ENCODE measurements at regions of chr6 and their contacts with region 1.

Region 1: GRCh38 chr6:28355743-28356665 is 6.3 kb downstream of the ZKSCAN3 start:
- DNase-seq: peak; percentile 74
- H3K4me3 ChIP-seq: peak overlapping the region; percentile 75 to 84
- H3K27ac ChIP-seq: peak overlapping the region; percentile 59 to 71; a peak in 3 of 4 replicates
- H3K4me1 ChIP-seq: peaks cover 10 to 20% of the 10 kb centered on the region in 2 experiments; a peak in 3 of 4 replicates
- H3K27me3 ChIP-seq: no peaks in the 10 kb centered on the region
- CTCF ChIP-seq: peak; percentile 68
- EP300 ChIP-seq: no peak
- RAD21 ChIP-seq: peak; percentile 85

Region 2: GRCh38 chr6:28218271-28219248 is 137.4 kb before region 1 on chr6:
- CTCF ChIA-PET with region 1: interaction called, 11 read pairs
- POLR2A ChIA-PET with region 1: no interaction called
- DNase-seq: peak; percentile 93
- H3K4me3 ChIP-seq: peak overlapping the region; percentile 55 to 67
- H3K27ac ChIP-seq: peak overlapping the region in 1 of 2 experiments; percentile 81; a peak in 2 of 4 replicates
- H3K4me1 ChIP-seq: peaks cover 0 to 11% of the 10 kb centered on the region in 2 experiments; a peak in 2 of 4 replicates
- H3K27me3 ChIP-seq: no peaks in the 10 kb centered on the region; the same call in 1 of the 2 replicates
- CTCF ChIP-seq: no peak
- EP300 ChIP-seq: no peak
- RAD21 ChIP-seq: no peak

Region 3: DNA sequence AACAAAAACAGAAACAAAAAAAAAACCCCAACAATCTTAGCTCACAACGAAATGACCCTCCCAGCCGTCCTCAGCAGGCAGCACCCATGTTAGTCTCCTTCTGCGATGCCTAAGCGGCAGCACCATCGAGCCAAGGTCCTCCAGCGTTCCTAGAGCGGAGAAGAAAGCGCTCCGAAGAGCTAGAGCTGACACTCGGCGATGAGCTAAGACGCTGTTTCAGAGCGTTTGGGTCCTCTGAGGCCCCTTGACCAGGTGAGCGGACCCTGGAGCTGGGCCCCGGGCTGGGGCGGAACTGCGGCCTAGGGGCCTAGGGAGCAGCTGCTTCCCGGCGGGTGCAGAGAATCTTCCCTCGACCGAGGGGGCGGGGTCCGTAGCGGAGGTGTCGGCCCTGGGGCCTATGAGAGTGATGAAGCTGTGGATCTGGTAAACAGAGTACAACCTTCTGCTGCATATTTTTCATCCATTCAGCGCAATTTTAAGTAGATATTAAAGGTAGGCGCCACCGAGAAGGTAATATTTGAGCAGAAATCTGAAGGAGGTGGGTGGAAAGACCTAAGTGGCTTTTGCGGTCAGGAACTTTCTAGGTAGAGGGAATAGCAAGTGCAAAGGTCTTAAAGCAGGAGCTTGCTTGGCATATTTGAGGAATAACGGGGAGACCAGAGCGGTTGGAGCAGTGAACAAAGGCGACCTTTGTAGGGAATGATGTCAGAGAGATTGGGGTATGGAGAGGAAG is 88.9 kb before region 1 on chr6 and contains the start of gene ZSCAN26:
- CTCF ChIA-PET with region 1: interaction called, 29 read pairs
- POLR2A ChIA-PET with region 1: interaction called, 8 read pairs
- DNase-seq: peak; percentile 85
- H3K4me3 ChIP-seq: peak within 1 kb of the TSS; percentile 76 to 85
- H3K27ac ChIP-seq: peak within 1 kb of the TSS; percentile 71 to 96
- H3K4me1 ChIP-seq: peaks cover 0 to 10% of the 10 kb centered on the region in 2 experiments; a peak in 3 of 4 replicates
- H3K27me3 ChIP-seq: no peaks in the 10 kb centered on the region
- CTCF ChIP-seq: no peak
- EP300 ChIP-seq: no peak
- RAD21 ChIP-seq: no peak
- polyA plus RNA-seq, gene ZSCAN26: 11.0 and 14.0 TPM in 2 replicates

Region 4: DNA sequence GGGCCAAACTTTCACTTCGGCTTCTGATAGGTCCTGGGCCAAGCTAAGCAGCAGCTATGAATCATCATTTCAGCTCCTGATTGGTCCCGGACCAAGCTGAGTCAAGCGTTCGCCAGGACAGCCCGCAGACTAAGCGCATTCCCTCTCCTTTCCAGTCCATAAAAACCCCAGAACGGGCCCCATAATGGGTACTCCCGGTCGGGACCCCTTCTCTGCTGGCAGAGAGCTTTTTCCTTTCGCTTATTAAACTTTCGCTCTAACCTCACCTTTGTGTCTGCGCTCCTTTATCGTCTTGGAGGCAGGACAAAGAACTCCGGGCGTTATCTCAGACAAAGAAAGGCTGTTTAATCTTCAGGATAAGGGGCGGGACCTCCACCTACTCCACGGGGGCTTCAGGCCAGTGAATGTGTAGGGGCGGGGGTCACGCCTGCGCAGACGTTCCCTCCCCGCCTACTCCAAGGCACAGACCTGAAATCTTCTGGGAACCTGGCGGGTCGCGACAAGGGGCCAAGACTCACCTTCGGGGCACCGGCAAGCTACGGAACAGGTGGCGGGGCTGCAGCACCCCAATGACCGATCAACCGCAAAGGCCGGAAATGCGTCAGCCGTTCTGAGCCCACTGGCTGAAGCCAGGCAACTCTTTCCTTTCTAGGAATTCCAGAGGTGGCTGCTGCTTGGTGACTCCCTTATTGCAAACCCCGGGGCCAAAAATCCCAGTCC is 20.3 kb before region 1 on chr6 and contains the start of gene ZSCAN31:
- CTCF ChIA-PET with region 1: interaction called, 29 read pairs
- POLR2A ChIA-PET with region 1: interaction called, 10 read pairs
- DNase-seq: peak; percentile 81
- H3K4me3 ChIP-seq: peak within 1 kb of the TSS; percentile 74 to 93
- H3K27ac ChIP-seq: peak within 1 kb of the TSS; percentile 92 to 99
- H3K4me1 ChIP-seq: peaks cover 0 to 7% of the 10 kb centered on the region in 2 experiments; a peak in 2 of 4 replicates
- H3K27me3 ChIP-seq: no peaks in the 10 kb centered on the region
- CTCF ChIP-seq: no peak
- EP300 ChIP-seq: no peak
- RAD21 ChIP-seq: no peak
- polyA plus RNA-seq, gene ZSCAN31: 1.9 and 2.1 TPM in 2 replicates

Region 5: DNA sequence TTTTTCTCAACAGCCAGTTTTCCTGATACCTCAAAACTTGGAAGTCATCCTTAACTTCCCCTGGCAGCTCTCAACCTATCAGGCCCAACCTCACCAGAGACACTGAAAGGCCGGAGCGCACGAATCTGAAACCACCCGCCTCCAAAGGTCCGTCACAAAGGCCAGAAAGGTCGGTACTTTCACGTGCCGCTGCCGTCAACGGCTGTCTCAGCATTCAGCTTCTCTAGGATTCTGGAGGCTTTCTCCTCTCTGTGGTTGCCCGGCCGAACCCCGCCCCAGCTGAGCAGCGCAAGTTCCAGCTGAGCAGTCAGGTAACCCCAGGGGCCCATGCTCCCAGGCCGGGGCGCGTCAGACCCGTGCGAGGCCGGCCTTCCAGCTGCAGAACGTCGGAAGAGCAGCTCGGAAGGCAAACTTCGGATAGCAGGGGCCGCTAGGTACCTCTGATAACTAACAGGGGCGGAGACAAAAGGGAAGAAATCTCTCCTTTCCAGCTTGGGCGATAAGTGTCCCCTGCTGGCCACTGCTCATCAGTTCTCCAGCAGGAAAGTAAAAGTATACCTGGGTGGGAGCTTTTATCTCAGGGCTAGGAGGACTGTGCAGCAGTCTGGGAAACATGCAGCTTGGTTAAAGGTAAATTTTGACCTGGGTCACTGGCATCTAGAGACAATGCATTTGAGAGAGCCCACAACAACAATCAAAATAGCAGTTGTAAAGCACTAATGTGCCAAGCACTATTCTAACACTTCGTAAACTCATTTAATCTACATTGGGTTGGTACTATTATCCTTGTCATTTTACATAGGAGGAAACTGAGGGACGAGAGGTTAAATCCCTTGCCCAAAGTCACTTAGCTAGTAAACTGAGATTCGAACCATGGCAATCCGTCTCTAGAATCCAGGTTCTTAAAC is 27.5 kb after region 1 on chr6:
- CTCF ChIA-PET with region 1: interaction called, 28 read pairs
- POLR2A ChIA-PET with region 1: no interaction called
- DNase-seq: peak; percentile 50
- H3K4me3 ChIP-seq: peak overlapping the region; percentile 46 to 61
- H3K27ac ChIP-seq: peak overlapping the region in 1 of 2 experiments; percentile 23; a peak in 3 of 4 replicates
- H3K4me1 ChIP-seq: no peaks in the 10 kb centered on the region; a peak in 2 of 4 replicates
- H3K27me3 ChIP-seq: no peaks in the 10 kb centered on the region
- CTCF ChIP-seq: peak; percentile 46
- EP300 ChIP-seq: no peak
- RAD21 ChIP-seq: no peak

Region 6: DNA sequence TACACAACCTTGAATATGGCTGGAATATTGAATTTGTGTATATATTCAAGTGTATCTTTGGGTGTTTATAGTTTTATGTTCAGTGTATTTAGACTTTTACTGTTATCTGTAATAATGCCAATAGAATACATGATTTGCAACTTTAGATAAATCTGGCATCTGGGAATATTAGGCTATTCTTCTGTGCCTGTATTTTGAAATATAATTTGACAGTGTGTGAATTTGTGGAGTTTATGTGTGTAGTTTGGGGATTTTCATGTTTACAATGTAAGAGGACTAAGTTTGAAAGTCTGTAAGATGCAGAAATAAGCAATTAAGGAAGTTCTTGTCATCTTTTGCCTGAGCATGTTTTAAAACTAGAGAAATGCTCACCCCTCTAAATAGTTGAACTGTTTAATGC is 1083.0 kb after region 1 on chr6 and contains the start of gene OR10C1:
- CTCF ChIA-PET with region 1: no interaction called
- POLR2A ChIA-PET with region 1: no interaction called
- DNase-seq: no peak
- H3K4me3 ChIP-seq: no peak within 1 kb of the TSS
- H3K27ac ChIP-seq: no peak within 1 kb of the TSS
- H3K4me1 ChIP-seq: no peaks in the 10 kb centered on the region
- H3K27me3 ChIP-seq: peaks cover 21% of the 10 kb centered on the region; the same call in 1 of the 2 replicates
- CTCF ChIP-seq: no peak
- EP300 ChIP-seq: no peak
- RAD21 ChIP-seq: no peak
- polyA plus RNA-seq, gene OR10C1: not detected in 2 replicates

Measured in SK-N-SH (cell line).